ENCODE measurements at regions of chr16 and their contacts with region 1.

Region 1: GRCh38 chr16:67727521-67728109 is 8.5 kb upstream of the GFOD2 start:
- DNase-seq: no peak
- H3K4me3 ChIP-seq: no peak overlapping the region
- H3K27ac ChIP-seq: no peak overlapping the region
- H3K4me1 ChIP-seq: peaks cover 9% of the 10 kb centered on the region
- CTCF ChIP-seq: no peak

Region 2: GRCh38 chr16:65919145-65919985 is 1808.2 kb before region 1 on chr16:
- CTCF ChIA-PET with region 1: no interaction called
- POLR2A ChIA-PET with region 1: no interaction called
- intact Hi-C with region 1: no loop called
- DNase-seq: no peak
- H3K4me3 ChIP-seq: no peak overlapping the region
- H3K27ac ChIP-seq: no peak overlapping the region
- H3K4me1 ChIP-seq: no peaks in the 10 kb centered on the region
- CTCF ChIP-seq: no peak

Region 3: GRCh38 chr16:67697422-67698185 is 30.0 kb before region 1 on chr16:
- CTCF ChIA-PET with region 1: no interaction called
- POLR2A ChIA-PET with region 1: no interaction called
- intact Hi-C with region 1: no loop called
- DNase-seq: no peak
- H3K4me3 ChIP-seq: no peak overlapping the region
- H3K27ac ChIP-seq: no peak overlapping the region
- H3K4me1 ChIP-seq: peaks cover 13% of the 10 kb centered on the region
- CTCF ChIP-seq: no peak

Region 4: DNA sequence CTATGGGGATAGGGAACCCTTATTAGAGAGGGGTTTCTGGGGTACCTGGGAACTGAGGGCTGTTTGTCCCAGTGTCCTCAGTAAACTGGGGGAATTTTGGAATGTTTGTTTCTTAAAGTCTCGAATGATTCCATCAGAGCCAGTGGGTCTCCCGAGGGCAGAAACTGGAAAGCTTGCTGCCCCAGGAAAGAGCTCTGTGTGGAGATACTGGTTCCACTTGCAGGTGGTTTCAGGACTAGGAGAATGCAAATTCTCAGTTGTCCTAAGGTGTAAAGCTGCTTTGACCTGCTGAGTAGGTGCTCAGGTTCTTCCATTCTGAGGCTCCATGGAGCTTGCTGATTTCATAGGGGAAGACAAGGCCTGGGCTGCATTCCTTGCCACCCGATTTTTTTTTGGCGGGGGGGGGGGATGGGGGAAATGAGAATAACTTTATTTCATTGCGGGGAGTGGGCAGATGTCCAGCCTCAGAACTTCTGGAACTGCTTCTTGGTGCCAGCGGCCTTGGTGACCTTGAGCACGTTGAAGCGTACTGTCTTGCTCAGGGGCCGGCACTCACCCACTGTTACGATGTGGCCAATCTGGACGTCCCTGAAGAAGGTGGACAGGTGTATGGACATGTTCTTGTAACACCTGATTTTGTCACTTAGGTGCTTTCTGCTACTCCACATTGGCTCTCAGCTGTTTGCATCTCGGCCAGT is 128.0 kb after region 1 on chr16:
- CTCF ChIA-PET with region 1: no interaction called
- POLR2A ChIA-PET with region 1: interaction called, 11 read pairs
- intact Hi-C with region 1: no loop called
- DNase-seq: no peak
- H3K4me3 ChIP-seq: no peak overlapping the region
- H3K27ac ChIP-seq: no peak overlapping the region
- H3K4me1 ChIP-seq: no peaks in the 10 kb centered on the region
- CTCF ChIP-seq: no peak